Activated naive CD4-positive, alpha-beta T cell treated with anti-CD3 and anti-CD28 coated beads for 36 hours (primary cell): ENCODE measurements at regions of chr11 and their contacts with region 1.

Region 1: DNA sequence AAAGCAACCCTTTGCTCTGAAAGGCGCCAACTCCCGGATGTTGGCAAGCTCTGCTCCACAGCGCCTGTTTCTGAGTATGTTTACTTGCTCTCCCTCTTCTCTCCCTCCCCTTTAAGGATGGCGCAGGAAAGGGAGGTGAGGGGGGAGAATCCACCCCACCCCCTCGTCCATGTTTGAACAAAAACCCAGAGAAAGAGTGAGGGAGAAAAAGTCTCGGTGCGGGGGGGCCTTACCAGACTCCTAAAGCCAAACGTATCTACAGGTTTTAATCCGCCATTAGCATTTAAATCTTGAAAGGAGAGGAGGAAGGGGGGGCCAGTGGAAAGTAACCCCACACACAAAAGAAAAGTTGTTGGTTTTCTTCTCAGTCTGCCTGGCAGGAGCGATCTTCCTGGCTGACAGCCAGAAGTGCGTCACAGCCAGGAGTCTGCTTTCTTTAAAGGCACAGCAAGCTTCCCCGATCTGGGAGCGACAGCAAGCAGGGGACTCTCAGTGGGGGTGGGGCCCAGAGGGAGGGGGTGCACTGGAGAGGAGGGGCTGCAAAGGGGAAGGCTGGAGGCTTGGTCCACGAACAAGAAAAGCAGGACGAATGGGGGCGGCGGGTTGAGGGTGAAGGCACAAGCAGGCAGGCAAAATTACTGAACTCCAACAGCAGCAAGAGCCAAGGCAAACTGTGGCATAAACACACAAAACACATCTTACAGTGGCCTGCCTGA is 39.5 kb downstream of the NUMA1 start:
- DNase-seq: peak; percentile 85
- H3K4me3 Mint-ChIP-seq: no peak overlapping the region
- H3K27ac Mint-ChIP-seq: no peak overlapping the region
- H3K4me1 Mint-ChIP-seq: peaks cover 44% of the 10 kb centered on the region
- H3K27me3 Mint-ChIP-seq: no peaks in the 10 kb centered on the region

Region 2: DNA sequence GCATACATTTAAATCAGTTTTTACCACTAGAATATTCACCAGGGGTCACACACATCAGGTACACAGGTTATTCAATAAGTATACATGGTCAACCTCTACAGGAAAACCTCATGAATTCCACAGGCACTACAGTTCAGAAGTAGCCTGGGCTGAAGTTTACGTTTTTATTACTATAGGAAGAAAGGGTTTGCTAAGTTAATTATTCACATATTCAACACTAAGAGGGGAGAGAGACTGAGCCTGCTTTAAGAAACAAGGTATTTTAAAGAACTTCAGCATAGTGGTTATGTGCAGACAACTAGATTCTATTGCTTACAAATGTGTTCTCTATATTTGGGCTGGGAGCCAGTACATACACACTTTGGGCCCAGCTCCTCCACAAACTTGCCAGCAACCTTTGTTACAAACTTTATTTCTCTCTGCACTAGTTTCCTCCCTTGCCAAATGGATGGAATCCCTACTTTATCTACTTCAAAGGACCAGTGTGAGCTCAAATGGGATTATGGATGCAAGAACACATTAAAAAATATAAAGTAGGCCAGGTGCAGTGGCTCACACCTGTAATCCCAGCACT is 10.3 kb before region 1 on chr11:
- CTCF ChIA-PET with region 1: interaction called, 44 read pairs
- intact Hi-C with region 1: loop called (anchors 1 kb)
- DNase-seq: no peak
- H3K4me3 Mint-ChIP-seq: no peak overlapping the region
- H3K27ac Mint-ChIP-seq: peak overlapping the region; percentile 13
- H3K4me1 Mint-ChIP-seq: peaks cover 42% of the 10 kb centered on the region
- H3K27me3 Mint-ChIP-seq: no peaks in the 10 kb centered on the region

Region 3: GRCh38 chr11:72102946-72103753 is 62.3 kb after region 1 on chr11 and contains the start of gene LAMTOR1:
- CTCF ChIA-PET with region 1: no interaction called
- intact Hi-C with region 1: loop called (anchors 2 kb)
- DNase-seq: peak; percentile 100
- H3K4me3 Mint-ChIP-seq: peak within 1 kb of the TSS; percentile 87
- H3K27ac Mint-ChIP-seq: peak within 1 kb of the TSS; percentile 77
- H3K4me1 Mint-ChIP-seq: peaks cover 36% of the 10 kb centered on the region
- H3K27me3 Mint-ChIP-seq: no peaks in the 10 kb centered on the region
- total RNA-seq, gene LAMTOR1: 39.1 to 41.8 TPM

Region 4: DNA sequence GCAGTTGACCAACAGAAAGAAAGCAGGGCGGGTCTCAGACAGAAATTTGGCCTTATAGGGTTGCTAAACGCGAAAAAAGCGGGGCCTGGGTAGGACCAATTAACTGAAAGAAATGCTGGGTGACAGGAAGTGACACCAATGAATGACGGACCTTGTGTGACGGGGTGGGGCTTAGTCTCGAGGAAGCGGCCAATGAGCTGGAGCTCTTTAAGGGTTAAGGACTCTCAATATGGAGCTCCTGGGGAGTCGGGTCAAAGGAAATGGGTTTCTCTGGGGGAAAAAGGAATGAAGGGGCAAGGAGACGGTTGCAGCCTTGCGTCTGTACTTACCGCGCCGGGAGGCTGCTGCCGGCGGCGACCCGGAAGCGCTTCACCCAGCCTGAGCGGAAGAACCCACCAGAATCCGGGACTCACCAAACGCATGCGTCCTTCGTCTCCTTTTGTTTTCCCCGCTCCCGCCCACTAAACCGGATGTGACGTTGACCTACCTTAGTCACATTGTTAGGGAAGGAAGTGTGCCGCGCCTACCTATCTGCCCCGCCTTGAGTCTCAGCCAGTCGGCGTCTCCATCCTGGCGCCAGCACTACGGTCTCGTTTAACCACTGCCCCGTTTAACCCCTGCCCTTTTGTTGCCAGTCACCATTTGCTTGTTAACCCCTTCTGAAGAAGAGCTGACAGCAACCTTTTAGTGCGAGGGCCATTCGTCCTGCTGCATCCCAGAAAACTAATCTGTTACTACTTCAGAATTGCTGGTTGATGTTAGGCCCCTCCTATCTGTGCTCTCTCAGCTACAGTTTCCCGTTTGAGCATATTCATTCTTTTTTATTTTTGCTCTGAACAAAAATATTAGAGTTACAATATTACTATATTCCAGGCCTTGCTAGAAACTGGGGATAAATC is 71.7 kb after region 1 on chr11 and contains the start of gene ANAPC15:
- CTCF ChIA-PET with region 1: no interaction called
- intact Hi-C with region 1: loop called (anchors 1 kb)
- DNase-seq: peak; percentile 100
- H3K4me3 Mint-ChIP-seq: peak within 1 kb of the TSS; percentile 85
- H3K27ac Mint-ChIP-seq: peak within 1 kb of the TSS; percentile 97
- H3K4me1 Mint-ChIP-seq: peaks cover 12% of the 10 kb centered on the region
- H3K27me3 Mint-ChIP-seq: no peaks in the 10 kb centered on the region
- total RNA-seq, gene ANAPC15: 69.1 to 70.3 TPM